ENCODE measurements at regions of chr7 and their contacts with region 1.

Region 1: DNA sequence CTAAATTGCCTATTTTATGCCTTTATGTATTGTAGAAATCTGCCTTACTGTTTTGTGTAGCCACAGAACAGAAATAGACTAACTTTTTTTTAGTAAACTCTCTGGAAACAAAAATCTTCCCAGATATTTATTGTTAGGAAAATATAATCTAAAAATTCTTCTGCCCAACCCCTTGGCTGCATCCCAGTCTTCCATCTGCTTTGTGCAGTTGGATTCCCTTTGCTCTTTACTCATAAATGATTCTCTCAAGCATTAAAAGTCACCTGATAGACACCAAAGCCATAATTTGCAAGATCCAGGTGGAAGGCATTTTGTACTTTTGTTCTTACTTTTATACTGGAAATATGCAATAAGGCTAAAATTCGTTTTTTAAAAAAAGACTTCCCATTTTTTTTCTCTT is 6.1 kb upstream of the CAV2 start:
- DNase-seq: no peak
- H3K4me3 ChIP-seq: no peak overlapping the region
- H3K27ac ChIP-seq: peak overlapping the region; percentile 67 to 98
- H3K4me1 ChIP-seq: peaks cover 0 to 73% (median 30%) of the 10 kb centered on the region in 4 donors
- H3K27me3 ChIP-seq: no peaks in the 10 kb centered on the region
- CTCF ChIP-seq: no peak

Region 2: GRCh38 chr7:116446212-116446855 is 47.1 kb before region 1 on chr7:
- intact Hi-C with region 1: loop called (anchors 5 kb)
- DNase-seq: no peak
- H3K4me3 ChIP-seq: peak overlapping the region in 1 of 2 donors; percentile 7
- H3K27ac ChIP-seq: peak overlapping the region; percentile 61 to 62
- H3K4me1 ChIP-seq: peaks cover 0 to 72% (median 33%) of the 10 kb centered on the region in 4 donors
- H3K27me3 ChIP-seq: no peaks in the 10 kb centered on the region
- CTCF ChIP-seq: no peak

Region 3: GRCh38 chr7:116598278-116598677 is 104.8 kb after region 1 on chr7:
- intact Hi-C with region 1: no loop called
- DNase-seq: no peak
- H3K4me3 ChIP-seq: no peak overlapping the region
- H3K27ac ChIP-seq: no peak overlapping the region
- H3K4me1 ChIP-seq: no peaks in the 10 kb centered on the region
- H3K27me3 ChIP-seq: no peaks in the 10 kb centered on the region
- CTCF ChIP-seq: no peak

Measured in tibial artery (tissue), 4 donors.